ENCODE measurements at regions of chr12 and their contacts with region 1.

Region 1: GRCh38 chr12:77231501-77231918 is 166.1 kb upstream of the E2F7 start:
- DNase-seq: no peak
- ATAC-seq: no peak
- H3K4me3 ChIP-seq: no peak overlapping the region
- H3K27ac ChIP-seq: no peak overlapping the region
- H3K4me1 ChIP-seq: no peaks in the 10 kb centered on the region
- H3K27me3 ChIP-seq: peaks cover 46% of the 10 kb centered on the region
- CTCF ChIP-seq: no peak

Region 2: GRCh38 chr12:77163074-77164038 is 68.2 kb before region 1 on chr12:
- CTCF ChIA-PET with region 1: no interaction called
- POLR2A ChIA-PET with region 1: no interaction called
- intact Hi-C with region 1: loop called (anchors 5 kb)
- DNase-seq: no peak
- ATAC-seq: peak; percentile 53; the same call in 1 of the 2 replicates
- H3K4me3 ChIP-seq: no peak overlapping the region
- H3K27ac ChIP-seq: no peak overlapping the region
- H3K4me1 ChIP-seq: no peaks in the 10 kb centered on the region
- H3K27me3 ChIP-seq: 0 out of 2 replicates have a peak, but pooled peaks cover 3% of the 10 kb centered on the region
- CTCF ChIP-seq: no peak